Panc1 (cell line): ENCODE measurements at regions of chr15 and their contacts with region 1.

Region 1: GRCh38 chr15:97703400-97703799 is 257.1 kb upstream of the ARRDC4 start:
- DNase-seq: no peak
- ATAC-seq: no peak
- H3K4me3 ChIP-seq: no peak overlapping the region
- H3K27ac ChIP-seq: no peak overlapping the region
- H3K4me1 ChIP-seq: no peaks in the 10 kb centered on the region
- H3K27me3 ChIP-seq: no peaks in the 10 kb centered on the region
- CTCF ChIP-seq: no peak

Region 2: DNA sequence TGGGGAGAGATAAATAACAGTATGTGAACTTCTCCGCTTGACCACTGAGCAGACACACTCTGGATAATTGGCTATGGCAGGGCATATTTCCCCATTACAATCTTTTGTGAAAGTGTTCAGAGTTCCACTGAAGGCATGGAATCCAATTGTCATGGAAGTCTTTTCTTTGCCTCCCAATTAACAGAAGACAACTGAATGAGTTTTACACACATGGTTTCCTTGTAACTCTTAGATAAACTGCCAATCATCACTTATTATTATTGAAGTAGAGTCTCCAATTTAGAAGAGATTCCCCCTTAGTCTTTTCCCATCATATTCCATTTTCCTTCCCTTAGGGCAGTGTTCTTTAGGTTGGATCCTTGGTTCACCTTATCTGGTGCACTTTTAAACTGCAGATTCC is 1064.6 kb before region 1 on chr15:
- CTCF ChIA-PET with region 1: no interaction called
- POLR2A ChIA-PET with region 1: interaction called, 12 read pairs
- in situ Hi-C with region 1: no loop called
- intact Hi-C with region 1: no loop called
- DNase-seq: no peak
- ATAC-seq: no peak
- H3K4me3 ChIP-seq: no peak overlapping the region
- H3K27ac ChIP-seq: no peak overlapping the region
- H3K4me1 ChIP-seq: no peaks in the 10 kb centered on the region
- H3K27me3 ChIP-seq: no peaks in the 10 kb centered on the region; the same call in 1 of the 2 replicates
- CTCF ChIP-seq: no peak

Region 3: DNA sequence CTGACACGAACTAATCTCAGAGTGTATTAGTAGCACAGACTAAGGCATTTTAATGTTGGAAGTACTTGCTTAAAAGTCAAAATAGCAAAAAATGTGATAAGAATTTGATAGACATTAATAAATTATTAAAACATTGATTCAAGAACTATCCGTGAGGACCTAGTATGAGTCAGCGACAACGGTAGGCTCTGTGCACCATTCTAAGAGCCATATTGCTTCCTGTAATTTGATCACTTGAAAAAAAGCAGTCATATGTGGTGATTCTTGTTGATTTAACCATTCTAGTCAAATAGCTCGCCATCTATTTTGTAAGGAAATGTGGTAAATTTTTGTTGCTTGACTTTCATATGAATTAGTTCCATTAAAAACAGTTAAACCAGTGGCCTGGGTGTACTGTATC is 277.8 kb before region 1 on chr15:
- CTCF ChIA-PET with region 1: no interaction called
- POLR2A ChIA-PET with region 1: no interaction called
- in situ Hi-C with region 1: no loop called
- intact Hi-C with region 1: no loop called
- DNase-seq: no peak
- ATAC-seq: no peak
- H3K4me3 ChIP-seq: no peak overlapping the region
- H3K27ac ChIP-seq: no peak overlapping the region
- H3K4me1 ChIP-seq: no peaks in the 10 kb centered on the region
- H3K27me3 ChIP-seq: no peaks in the 10 kb centered on the region
- CTCF ChIP-seq: no peak